Activated CD8-positive, alpha-beta T cell treated with anti-CD3 and anti-CD28 coated beads for 36 hours (primary cell): ENCODE measurements at regions of chr12 and their contacts with region 1.

Region 1: GRCh38 chr12:95959107-95959506 is 16.0 kb downstream of the AMDHD1 start:
- DNase-seq: no peak
- ATAC-seq: no peak
- H3K4me3 Mint-ChIP-seq: no peak overlapping the region
- H3K27ac Mint-ChIP-seq: no peak overlapping the region
- H3K4me1 Mint-ChIP-seq: no peaks in the 10 kb centered on the region
- H3K27me3 Mint-ChIP-seq: no peaks in the 10 kb centered on the region
- CTCF ChIP-seq: no peak

Region 2: DNA sequence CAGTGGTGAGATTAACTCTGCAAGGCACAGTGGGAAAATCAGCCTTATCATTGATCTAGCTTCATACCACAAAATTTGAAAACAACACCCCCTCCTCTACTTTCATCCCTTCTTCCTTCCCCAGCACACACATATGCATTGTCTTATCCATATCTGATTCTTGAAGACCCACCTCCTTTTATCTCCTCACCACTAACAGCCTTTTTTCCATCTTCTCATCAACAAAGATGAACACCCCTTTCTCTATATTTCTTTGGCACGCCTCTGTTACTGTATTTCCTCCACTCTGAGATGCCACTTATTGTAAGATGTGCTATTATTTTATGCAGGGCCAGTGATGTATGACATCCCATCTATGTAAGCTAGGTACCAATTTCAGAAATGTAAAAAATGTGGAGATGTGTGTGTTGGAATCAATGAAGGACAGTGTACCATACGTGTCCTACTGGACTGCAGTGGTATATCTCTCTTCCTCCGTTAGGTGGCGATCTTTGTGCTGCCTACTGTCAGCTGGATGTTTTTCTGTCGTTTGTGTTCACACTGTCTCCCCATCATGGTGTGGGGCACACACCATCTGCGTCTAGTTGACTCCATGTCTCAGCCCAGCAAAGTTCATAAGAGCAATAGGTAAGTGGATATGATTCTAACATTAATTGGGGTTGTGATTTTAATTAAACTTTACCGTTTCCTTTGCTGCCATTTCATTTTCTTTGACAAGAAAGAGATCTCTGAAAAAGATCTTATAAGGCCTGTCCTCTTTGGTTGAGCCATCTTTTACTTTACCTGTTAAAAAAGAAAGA is 40.7 kb before region 1 on chr12:
- CTCF ChIA-PET with region 1: interaction called, 10 read pairs
- POLR2A ChIA-PET with region 1: interaction called, 3 read pairs
- intact Hi-C with region 1: no loop called
- DNase-seq: peak; percentile 62
- ATAC-seq: peak; percentile 99
- H3K4me3 Mint-ChIP-seq: no peak overlapping the region
- H3K27ac Mint-ChIP-seq: no peak overlapping the region
- H3K4me1 Mint-ChIP-seq: no peaks in the 10 kb centered on the region
- H3K27me3 Mint-ChIP-seq: peaks cover 2% of the 10 kb centered on the region
- CTCF ChIP-seq: peak; percentile 95

Region 3: GRCh38 chr12:95976416-95976832 is 17.3 kb after region 1 on chr12:
- CTCF ChIA-PET with region 1: no interaction called
- POLR2A ChIA-PET with region 1: no interaction called
- intact Hi-C with region 1: no loop called
- DNase-seq: no peak
- ATAC-seq: no peak
- H3K4me3 Mint-ChIP-seq: no peak overlapping the region
- H3K27ac Mint-ChIP-seq: no peak overlapping the region
- H3K4me1 Mint-ChIP-seq: no peaks in the 10 kb centered on the region
- H3K27me3 Mint-ChIP-seq: no peaks in the 10 kb centered on the region
- CTCF ChIP-seq: no peak

Region 4: DNA sequence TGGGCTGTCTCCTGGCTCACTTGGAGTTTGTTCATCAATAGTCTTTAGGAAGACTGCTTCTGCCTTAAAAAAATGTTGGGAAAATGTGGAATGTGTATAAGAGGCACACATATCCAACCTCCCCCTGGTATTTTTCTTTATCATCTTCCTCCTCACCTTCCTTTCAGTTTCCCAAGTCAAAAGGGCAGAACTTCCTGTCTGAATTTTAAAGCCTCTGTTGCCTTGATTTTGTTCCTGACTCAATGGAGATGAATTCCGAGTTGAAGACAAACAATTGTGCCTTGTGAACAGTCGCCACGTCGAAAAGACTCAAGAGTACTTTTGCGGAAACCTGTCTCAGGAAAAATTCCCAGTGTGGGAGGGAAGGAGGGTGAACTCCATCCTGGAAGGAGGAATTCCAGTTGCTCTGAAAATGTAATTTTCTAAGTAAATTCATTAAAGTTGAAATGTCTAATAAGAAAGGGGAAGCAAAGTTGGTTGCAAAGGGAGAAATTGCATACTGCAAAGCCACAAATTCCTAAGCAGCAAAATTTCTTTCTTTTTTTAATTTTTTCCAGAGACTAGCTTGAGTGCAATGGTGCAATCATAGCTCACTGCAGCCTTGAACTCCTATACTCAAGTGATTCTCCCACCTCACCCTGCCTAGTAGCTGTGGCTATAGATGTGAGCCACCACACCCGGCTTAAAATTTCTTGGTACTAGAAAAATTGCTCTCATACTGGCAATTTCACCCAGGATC is 184.9 kb after region 1 on chr12:
- CTCF ChIA-PET with region 1: no interaction called
- POLR2A ChIA-PET with region 1: no interaction called
- intact Hi-C with region 1: no loop called
- DNase-seq: no peak
- ATAC-seq: no peak
- H3K4me3 Mint-ChIP-seq: no peak overlapping the region
- H3K27ac Mint-ChIP-seq: peak overlapping the region; percentile 9
- H3K4me1 Mint-ChIP-seq: peaks cover 22% of the 10 kb centered on the region
- H3K27me3 Mint-ChIP-seq: no peaks in the 10 kb centered on the region
- CTCF ChIP-seq: no peak